K562 (cell line): ENCODE measurements at regions of chr2 and their contacts with region 1.

Region 1: DNA sequence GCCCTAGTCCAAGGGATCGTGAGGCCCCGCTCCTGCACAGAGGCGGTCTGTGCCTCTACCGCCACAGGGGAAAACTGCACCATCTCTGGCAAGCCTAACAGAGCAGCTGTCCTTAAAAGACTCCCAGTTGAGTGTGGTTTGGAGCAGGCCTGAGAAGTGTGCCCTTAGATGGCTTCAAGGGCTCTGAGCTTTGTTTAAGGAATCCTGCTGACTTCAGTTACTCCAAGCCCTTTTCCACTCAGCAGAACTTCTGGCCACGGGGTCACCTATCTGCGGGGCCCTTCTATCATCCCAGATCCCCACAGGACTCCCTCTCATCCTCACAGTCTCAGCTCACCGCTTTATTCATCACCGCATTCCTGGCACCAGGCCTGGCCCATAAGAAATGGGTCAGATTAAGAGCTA is 131.5 kb downstream of the CCDC74A start:
- DNase-seq: no peak
- ATAC-seq: no peak
- H3K4me3 ChIP-seq: no peak overlapping the region
- H3K27ac ChIP-seq: no peak overlapping the region
- H3K4me1 ChIP-seq: peaks cover 11 to 18% of the 10 kb centered on the region in 2 experiments
- H3K27me3 ChIP-seq: no peaks in the 10 kb centered on the region
- CTCF ChIP-seq: no peak
- EP300 ChIP-seq: no peak
- POLR2A ChIP-seq: no peak
- RAD21 ChIP-seq: no peak

Region 2: DNA sequence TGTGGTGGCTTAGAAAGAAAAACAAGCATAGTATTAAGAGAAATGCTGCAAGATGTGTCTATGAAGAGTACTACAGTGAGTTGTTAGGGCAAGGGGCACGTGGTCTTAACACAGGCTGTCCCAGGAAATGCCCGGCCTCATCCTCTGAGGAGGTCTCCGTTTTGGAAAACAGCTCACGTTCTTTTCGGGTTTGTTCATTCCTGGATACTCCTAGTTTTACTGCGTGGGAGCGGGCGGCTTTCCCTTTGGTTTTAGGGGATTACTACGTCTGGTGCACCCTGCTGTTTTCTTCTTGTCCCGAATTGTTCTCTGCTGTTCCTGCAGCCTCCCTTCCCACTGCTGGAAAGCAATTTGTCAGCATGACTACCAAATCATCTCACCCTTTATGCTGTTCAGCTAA is 239.7 kb before region 1 on chr2:
- CTCF ChIA-PET with region 1: no interaction called
- POLR2A ChIA-PET with region 1: no interaction called
- in situ Hi-C with region 1: loop called (anchors 5 kb)
- intact Hi-C with region 1: no loop called
- DNase-seq: no peak
- ATAC-seq: no peak; the same call in 2 of the 3 replicates
- H3K4me3 ChIP-seq: no peak overlapping the region
- H3K27ac ChIP-seq: no peak overlapping the region
- H3K4me1 ChIP-seq: no peaks in the 10 kb centered on the region; a peak in 1 of 5 replicates
- H3K27me3 ChIP-seq: peaks cover 21 to 26% of the 10 kb centered on the region in 2 experiments; a peak in 4 of 5 replicates
- CTCF ChIP-seq: no peak
- EP300 ChIP-seq: no peak
- POLR2A ChIP-seq: no peak
- RAD21 ChIP-seq: no peak

Region 3: DNA sequence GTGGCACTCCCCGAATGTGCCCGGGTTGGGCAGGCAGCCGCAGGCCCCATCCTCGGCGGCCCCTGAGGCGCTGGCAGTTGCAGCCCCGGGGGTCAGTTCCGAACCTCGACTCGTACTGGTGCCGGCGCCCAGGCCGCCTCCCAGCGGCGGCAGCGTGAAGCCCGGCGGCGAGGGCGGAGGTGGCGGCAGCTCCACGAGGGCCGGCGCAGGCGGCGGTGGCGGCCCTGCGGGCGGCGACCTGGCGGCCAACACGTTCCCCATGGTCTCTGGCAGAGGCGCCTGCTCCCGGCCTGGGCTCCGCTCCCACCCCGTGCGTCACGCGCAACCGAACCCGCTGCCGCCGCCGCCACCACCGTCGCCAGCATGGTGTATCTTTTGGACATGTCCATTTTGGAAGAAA is 64.8 kb after region 1 on chr2:
- CTCF ChIA-PET with region 1: no interaction called
- POLR2A ChIA-PET with region 1: no interaction called
- in situ Hi-C with region 1: no loop called
- intact Hi-C with region 1: no loop called
- DNase-seq: no peak
- ATAC-seq: no peak
- H3K4me3 ChIP-seq: no peak overlapping the region
- H3K27ac ChIP-seq: no peak overlapping the region
- H3K4me1 ChIP-seq: no peaks in the 10 kb centered on the region
- H3K27me3 ChIP-seq: peaks cover 0 to 10% of the 10 kb centered on the region in 2 experiments; a peak in 1 of 5 replicates
- CTCF ChIP-seq: no peak
- EP300 ChIP-seq: no peak
- POLR2A ChIP-seq: no peak
- RAD21 ChIP-seq: no peak